ENCODE measurements at regions of chr19 and their contacts with region 1.

Region 1: GRCh38 chr19:45643024-45643926 is 4.1 kb upstream of the EML2 start:
- DNase-seq: peak; percentile 77 to 93 (median 88)
- ATAC-seq: peak; percentile 35
- H3K4me3 ChIP-seq: peak overlapping the region; percentile 66
- H3K4me3 Mint-ChIP-seq: peak overlapping the region; percentile 74
- H3K27ac ChIP-seq: peak overlapping the region; percentile 91 to 92
- H3K27ac Mint-ChIP-seq: peak overlapping the region; percentile 72
- H3K4me1 ChIP-seq: peaks cover 72% of the 10 kb centered on the region
- H3K4me1 Mint-ChIP-seq: peaks cover 58% of the 10 kb centered on the region
- H3K27me3 ChIP-seq: no peaks in the 10 kb centered on the region
- H3K27me3 Mint-ChIP-seq: no peaks in the 10 kb centered on the region
- CTCF ChIP-seq: peak; percentile 96

Region 2: DNA sequence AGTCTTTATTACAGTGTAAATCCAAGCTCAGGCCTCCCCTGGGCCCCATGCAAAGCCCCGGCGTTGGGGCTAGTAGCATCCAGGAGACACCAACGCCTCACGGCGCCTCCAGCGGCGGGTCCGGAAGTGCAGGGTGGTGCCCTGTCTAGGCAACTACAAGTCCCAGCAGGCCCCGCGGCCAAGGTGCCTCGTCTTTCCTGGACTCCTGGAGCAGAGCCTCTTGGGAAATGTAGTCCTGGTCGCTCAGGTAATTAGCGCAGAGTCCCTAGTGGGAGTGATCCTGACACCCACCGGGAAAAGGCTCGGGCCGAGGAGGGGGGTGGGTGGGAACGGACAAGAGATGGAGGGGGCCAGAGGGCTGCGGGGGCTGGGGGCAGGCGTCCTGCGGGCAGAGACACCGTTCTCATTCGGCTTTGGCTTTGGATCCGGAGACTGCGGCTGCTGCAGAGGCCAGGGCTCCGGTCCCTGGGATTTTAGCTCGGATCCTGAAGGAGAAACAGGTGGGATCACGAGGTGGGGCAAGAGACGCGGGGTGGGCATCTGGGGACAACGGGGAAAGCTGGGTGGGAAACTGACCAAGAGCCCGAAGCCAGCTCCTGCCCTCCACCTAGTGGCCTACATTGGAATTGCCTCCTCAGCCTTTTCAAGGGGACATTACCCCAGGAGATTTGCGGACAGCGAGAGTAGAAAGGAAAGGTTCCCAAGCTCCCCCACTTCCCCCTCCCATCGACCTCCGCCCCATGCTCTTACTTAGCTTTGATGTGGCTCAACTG is 157.8 kb before region 1 on chr19:
- CTCF ChIA-PET with region 1: interaction called, 13 read pairs
- POLR2A ChIA-PET with region 1: no interaction called
- intact Hi-C with region 1: no loop called
- DNase-seq: peak; percentile 95 to 98 (median 97)
- ATAC-seq: peak; percentile 99
- H3K4me3 ChIP-seq: peak overlapping the region; percentile 69
- H3K4me3 Mint-ChIP-seq: peak overlapping the region; percentile 98
- H3K27ac ChIP-seq: no peak overlapping the region
- H3K27ac Mint-ChIP-seq: peak overlapping the region; percentile 47
- H3K4me1 ChIP-seq: peaks cover 14% of the 10 kb centered on the region
- H3K4me1 Mint-ChIP-seq: peaks cover 6% of the 10 kb centered on the region
- H3K27me3 ChIP-seq: no peaks in the 10 kb centered on the region
- H3K27me3 Mint-ChIP-seq: peaks cover 7% of the 10 kb centered on the region
- CTCF ChIP-seq: peak; percentile 86

Region 3: DNA sequence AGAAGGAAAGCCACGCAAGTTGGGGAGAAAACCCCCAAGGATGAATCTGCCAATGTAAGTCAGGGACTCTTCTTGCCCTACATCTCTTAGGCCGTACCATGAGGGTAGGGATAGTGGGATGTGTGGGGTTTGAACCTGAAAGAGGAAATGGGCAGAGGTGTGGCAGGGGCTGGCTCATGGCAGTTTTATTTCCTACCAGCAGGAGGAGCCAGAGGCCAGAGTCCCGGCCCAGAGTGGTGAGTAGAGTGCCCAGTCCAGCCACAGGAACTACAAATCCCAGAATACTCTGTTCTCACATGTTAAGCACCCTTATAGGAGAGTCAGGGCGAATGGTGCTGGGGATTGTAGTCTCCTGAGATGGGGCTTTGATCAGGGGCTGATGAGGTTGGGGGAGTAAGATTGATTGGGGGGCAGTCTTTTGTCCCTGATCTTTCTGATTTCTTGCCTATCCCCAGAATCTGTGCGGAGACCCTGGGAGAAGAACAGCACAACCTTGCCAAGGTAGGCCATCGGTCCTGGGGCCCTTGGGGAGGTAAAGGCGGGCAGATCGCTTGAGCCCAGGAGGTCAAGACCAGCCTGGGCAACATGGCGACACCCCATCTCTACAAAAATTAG is 119.5 kb before region 1 on chr19:
- CTCF ChIA-PET with region 1: interaction called, 3 read pairs
- POLR2A ChIA-PET with region 1: no interaction called
- intact Hi-C with region 1: loop called (anchors 1 kb)
- DNase-seq: peak; percentile 54 to 92 (median 66)
- ATAC-seq: peak; percentile 99
- H3K4me3 ChIP-seq: no peak overlapping the region
- H3K4me3 Mint-ChIP-seq: no peak overlapping the region
- H3K27ac ChIP-seq: no peak overlapping the region
- H3K27ac Mint-ChIP-seq: peak overlapping the region; percentile 53
- H3K4me1 ChIP-seq: peaks cover 11% of the 10 kb centered on the region
- H3K4me1 Mint-ChIP-seq: peaks cover 19% of the 10 kb centered on the region
- H3K27me3 ChIP-seq: no peaks in the 10 kb centered on the region
- H3K27me3 Mint-ChIP-seq: no peaks in the 10 kb centered on the region
- CTCF ChIP-seq: peak; percentile 76

Region 4: GRCh38 chr19:45615795-45616708 is 27.2 kb before region 1 on chr19:
- CTCF ChIA-PET with region 1: interaction called, 20 read pairs
- POLR2A ChIA-PET with region 1: interaction called, 5 read pairs
- intact Hi-C with region 1: no loop called
- DNase-seq: peak; percentile 31 to 89 (median 63)
- ATAC-seq: peak; percentile 98
- H3K4me3 ChIP-seq: no peak overlapping the region
- H3K4me3 Mint-ChIP-seq: no peak overlapping the region
- H3K27ac ChIP-seq: no peak overlapping the region
- H3K27ac Mint-ChIP-seq: no peak overlapping the region
- H3K4me1 ChIP-seq: peaks cover 16% of the 10 kb centered on the region
- H3K4me1 Mint-ChIP-seq: peaks cover 5% of the 10 kb centered on the region
- H3K27me3 ChIP-seq: no peaks in the 10 kb centered on the region
- H3K27me3 Mint-ChIP-seq: no peaks in the 10 kb centered on the region
- CTCF ChIP-seq: no peak

Region 5: DNA sequence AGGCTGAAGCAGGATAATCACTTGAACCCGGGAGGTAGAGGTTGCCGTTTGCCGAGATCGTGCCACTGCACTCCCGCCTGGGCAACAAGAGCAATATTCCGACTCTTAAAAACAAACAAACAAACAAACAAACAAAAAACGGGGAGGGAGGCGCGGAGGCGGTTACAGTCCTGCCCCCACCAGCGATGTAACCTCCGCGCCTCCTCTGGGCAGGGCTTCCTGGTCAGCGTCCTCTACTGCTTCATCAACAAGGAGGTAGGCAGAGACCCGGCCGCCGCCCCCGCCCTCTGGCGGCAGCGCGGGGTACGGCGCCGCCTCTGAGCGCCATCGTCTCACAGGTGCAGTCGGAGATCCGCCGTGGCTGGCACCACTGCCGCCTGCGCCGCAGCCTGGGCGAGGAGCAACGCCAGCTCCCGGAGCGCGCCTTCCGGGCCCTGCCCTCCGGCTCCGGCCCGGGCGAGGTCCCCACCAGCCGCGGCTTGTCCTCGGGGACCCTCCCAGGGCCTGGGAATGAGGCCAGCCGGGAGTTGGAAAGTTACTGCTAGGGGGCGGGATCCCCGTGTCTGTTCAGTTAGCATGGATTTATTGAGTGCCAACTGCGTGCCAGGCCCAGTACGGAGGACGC is 38.2 kb after region 1 on chr19:
- CTCF ChIA-PET with region 1: interaction called, 35 read pairs
- POLR2A ChIA-PET with region 1: interaction called, 4 read pairs
- intact Hi-C with region 1: no loop called
- DNase-seq: peak; percentile 69 to 92 (median 84)
- ATAC-seq: peak; percentile 77
- H3K4me3 ChIP-seq: peak overlapping the region; percentile 47
- H3K4me3 Mint-ChIP-seq: peak overlapping the region; percentile 82
- H3K27ac ChIP-seq: no peak overlapping the region
- H3K27ac Mint-ChIP-seq: no peak overlapping the region
- H3K4me1 ChIP-seq: peaks cover 29% of the 10 kb centered on the region
- H3K4me1 Mint-ChIP-seq: peaks cover 21% of the 10 kb centered on the region
- H3K27me3 ChIP-seq: no peaks in the 10 kb centered on the region
- H3K27me3 Mint-ChIP-seq: no peaks in the 10 kb centered on the region
- CTCF ChIP-seq: peak; percentile 97

Region 6: GRCh38 chr19:45739498-45740439 is 96.5 kb after region 1 on chr19:
- CTCF ChIA-PET with region 1: no interaction called
- POLR2A ChIA-PET with region 1: no interaction called
- intact Hi-C with region 1: no loop called
- DNase-seq: no peak
- ATAC-seq: no peak
- H3K4me3 ChIP-seq: no peak overlapping the region
- H3K4me3 Mint-ChIP-seq: no peak overlapping the region
- H3K27ac ChIP-seq: no peak overlapping the region
- H3K27ac Mint-ChIP-seq: no peak overlapping the region
- H3K4me1 ChIP-seq: no peaks in the 10 kb centered on the region
- H3K4me1 Mint-ChIP-seq: no peaks in the 10 kb centered on the region
- H3K27me3 ChIP-seq: no peaks in the 10 kb centered on the region
- H3K27me3 Mint-ChIP-seq: peaks cover 5% of the 10 kb centered on the region
- CTCF ChIP-seq: no peak

Measured in CD4-positive, alpha-beta T cell (primary cell).